GM13977 (cell line): ENCODE measurements at regions of chr10 and their contacts with region 1.

Region 1: GRCh38 chr10:89563861-89564478 is 28.6 kb upstream of the SLC16A12 start:
- DNase-seq: peak; percentile 55
- CTCF ChIP-seq: peak; percentile 66

Region 2: DNA sequence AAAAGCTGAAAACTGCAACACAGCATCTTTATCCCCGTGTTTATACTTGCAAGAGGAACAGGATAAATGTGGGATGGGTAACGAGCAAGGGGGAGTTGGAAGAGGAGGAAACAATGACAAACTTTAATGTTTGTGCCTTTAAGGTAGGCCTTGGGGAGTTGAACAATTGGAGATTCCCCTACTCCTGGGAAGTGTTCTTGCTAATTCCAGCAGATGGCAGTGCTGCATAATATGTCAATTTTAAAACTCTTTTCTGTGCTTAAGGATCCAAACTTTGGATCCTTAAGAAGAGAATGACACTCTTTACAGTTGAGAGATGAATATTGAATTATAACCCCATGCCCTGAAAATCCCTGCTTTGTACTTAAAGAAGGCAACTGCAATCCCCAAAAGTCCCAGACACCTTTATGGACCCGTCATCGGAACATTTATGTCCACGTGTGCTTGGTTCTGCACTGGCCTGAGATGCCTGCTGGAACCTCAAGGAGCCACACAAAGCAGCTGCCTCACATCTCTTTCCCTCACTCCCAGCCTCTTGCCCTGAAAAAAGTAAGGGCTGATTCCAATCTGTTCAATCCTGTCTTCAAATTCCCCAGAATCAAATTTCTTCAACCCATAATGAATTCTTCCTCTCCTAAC is 137.6 kb before region 1 on chr10:
- in situ Hi-C with region 1: loop called (anchors 10 kb)
- DNase-seq: peak; percentile 49
- CTCF ChIP-seq: peak; percentile 80